H1 (cell line): ENCODE measurements at regions of chr13 and their contacts with region 1.

Region 1: GRCh38 chr13:110683203-110683883 is 22.6 kb downstream of the CARS2 start:
- DNase-seq: no peak
- H3K4me3 ChIP-seq: no peak overlapping the region
- H3K27ac ChIP-seq: no peak overlapping the region
- H3K4me1 ChIP-seq: no peaks in the 10 kb centered on the region
- H3K27me3 ChIP-seq: no peaks in the 10 kb centered on the region
- CTCF ChIP-seq: peak; percentile 39 to 53 (median 45); a peak in 3 of 4 replicates
- EP300 ChIP-seq: no peak
- POLR2A ChIP-seq: no peak
- RAD21 ChIP-seq: peak; percentile 62

Region 2: DNA sequence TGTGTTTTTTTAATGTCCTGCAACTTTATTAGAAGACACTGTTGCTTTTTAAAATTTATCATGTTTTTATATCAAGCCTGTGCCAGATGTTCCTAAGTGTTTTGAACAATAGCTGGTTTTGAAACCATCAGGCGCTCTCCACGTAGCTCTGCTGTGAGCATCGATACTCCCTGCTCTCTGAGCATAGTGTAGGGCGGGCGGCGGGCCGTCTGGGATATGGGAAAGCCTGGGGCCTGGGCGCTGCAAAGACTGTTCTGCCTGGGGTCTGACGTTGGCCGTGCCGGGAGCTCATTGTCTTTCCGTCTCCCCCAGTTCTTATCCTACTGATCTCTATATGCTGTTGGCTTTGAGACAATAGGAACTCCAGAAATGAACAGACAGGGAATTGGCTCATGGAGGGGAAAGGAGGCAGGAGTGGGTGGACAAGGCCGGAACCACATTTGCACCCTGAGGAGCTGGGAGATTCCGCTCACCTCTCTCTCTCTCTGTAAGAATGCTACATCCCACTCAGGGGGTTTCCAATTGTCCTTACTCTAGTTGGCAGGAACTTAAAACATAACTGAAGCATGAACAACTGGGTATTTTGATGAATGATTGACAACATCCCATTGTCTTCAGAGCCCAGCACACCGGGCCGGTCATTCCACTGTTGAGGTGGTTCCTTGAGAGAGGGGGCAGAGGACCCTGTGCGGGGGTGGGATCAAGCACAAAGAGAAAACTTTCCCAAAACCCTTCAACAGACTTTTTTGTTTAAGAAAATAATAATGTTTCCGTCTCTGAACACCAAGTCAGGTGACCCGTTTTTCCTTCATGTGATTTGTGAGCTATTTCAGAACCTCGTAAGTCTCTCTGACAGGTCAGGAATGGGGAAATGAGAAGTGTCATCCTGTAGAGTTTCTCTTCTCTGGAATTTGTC is 311.5 kb before region 1 on chr13:
- CTCF ChIA-PET with region 1: no interaction called
- POLR2A ChIA-PET with region 1: no interaction called
- DNase-seq: no peak
- H3K4me3 ChIP-seq: no peak overlapping the region
- H3K27ac ChIP-seq: no peak overlapping the region
- H3K4me1 ChIP-seq: no peaks in the 10 kb centered on the region
- H3K27me3 ChIP-seq: no peaks in the 10 kb centered on the region
- CTCF ChIP-seq: no peak
- EP300 ChIP-seq: no peak
- POLR2A ChIP-seq: no peak
- RAD21 ChIP-seq: no peak

Region 3: GRCh38 chr13:110644892-110645521 is 38.3 kb before region 1 on chr13:
- CTCF ChIA-PET with region 1: interaction called, 12 read pairs
- POLR2A ChIA-PET with region 1: interaction called, 3 read pairs
- DNase-seq: peak; percentile 82 to 87
- H3K4me3 ChIP-seq: no peak overlapping the region
- H3K27ac ChIP-seq: no peak overlapping the region
- H3K4me1 ChIP-seq: peaks cover 0 to 11% (median 7%) of the 10 kb centered on the region in 4 experiments; a peak in 5 of 7 replicates
- H3K27me3 ChIP-seq: no peaks in the 10 kb centered on the region
- CTCF ChIP-seq: peak in 2 of 3 experiments; percentile 83 to 85; a peak in 3 of 4 replicates
- EP300 ChIP-seq: no peak
- POLR2A ChIP-seq: no peak
- RAD21 ChIP-seq: peak; percentile 93

Region 4: DNA sequence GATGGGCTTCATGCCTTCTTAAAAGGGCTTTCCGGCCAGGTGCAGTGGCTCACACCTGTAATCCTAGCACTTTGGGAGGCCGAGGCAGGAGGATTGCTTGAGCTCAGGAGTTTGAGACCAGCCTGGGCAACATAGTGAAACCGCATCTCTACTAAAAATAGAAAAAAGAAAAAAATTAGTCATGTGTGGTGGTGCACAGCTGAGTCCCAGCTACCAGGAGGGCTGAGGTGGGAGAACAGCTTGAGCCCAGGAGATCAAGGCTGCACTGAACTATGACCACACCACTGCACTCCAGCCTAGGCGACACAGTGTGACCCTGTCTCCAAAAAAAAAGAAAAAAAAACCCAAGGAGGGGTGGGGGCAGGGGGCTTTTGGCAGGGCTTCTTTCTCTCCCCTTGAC is 15.3 kb after region 1 on chr13:
- CTCF ChIA-PET with region 1: interaction called, 13 read pairs
- POLR2A ChIA-PET with region 1: interaction called, 43 read pairs
- DNase-seq: no peak
- H3K4me3 ChIP-seq: no peak overlapping the region
- H3K27ac ChIP-seq: no peak overlapping the region
- H3K4me1 ChIP-seq: peaks cover 0 to 3% (median under 1%) of the 10 kb centered on the region in 4 experiments; a peak in 1 of 7 replicates
- H3K27me3 ChIP-seq: no peaks in the 10 kb centered on the region
- CTCF ChIP-seq: no peak
- EP300 ChIP-seq: no peak
- POLR2A ChIP-seq: no peak
- RAD21 ChIP-seq: no peak

Region 5: GRCh38 chr13:110705826-110706569 is 22.7 kb after region 1 on chr13 and contains the start of gene CARS2:
- CTCF ChIA-PET with region 1: interaction called, 13 read pairs
- POLR2A ChIA-PET with region 1: interaction called, 43 read pairs
- DNase-seq: peak; percentile 87 to 91
- H3K4me3 ChIP-seq: peak within 1 kb of the TSS; percentile 66 to 96 (median 80)
- H3K27ac ChIP-seq: peak within 1 kb of the TSS; percentile 71
- H3K4me1 ChIP-seq: peaks cover 0 to 14% (median 6%) of the 10 kb centered on the region in 4 experiments; a peak in 4 of 7 replicates
- H3K27me3 ChIP-seq: no peaks in the 10 kb centered on the region
- CTCF ChIP-seq: peak in 1 of 3 experiments; percentile 6; a peak in 1 of 4 replicates
- EP300 ChIP-seq: no peak
- POLR2A ChIP-seq: peak in 1 of 2 experiments; percentile 35; a peak in 2 of 3 replicates
- RAD21 ChIP-seq: no peak
- total RNA-seq, gene CARS2: 44.5 and 55.9 TPM in 2 replicates

Region 6: GRCh38 chr13:110715395-110716235 is 32.3 kb after region 1 on chr13:
- CTCF ChIA-PET with region 1: interaction called, 7 read pairs
- POLR2A ChIA-PET with region 1: interaction called, 10 read pairs
- DNase-seq: peak; percentile 93 to 97
- H3K4me3 ChIP-seq: peak overlapping the region; percentile 77 to 98 (median 90)
- H3K27ac ChIP-seq: peak overlapping the region; percentile 24
- H3K4me1 ChIP-seq: peaks cover 0 to 2% (median 1%) of the 10 kb centered on the region in 4 experiments; a peak in 2 of 7 replicates
- H3K27me3 ChIP-seq: no peaks in the 10 kb centered on the region
- CTCF ChIP-seq: no peak
- EP300 ChIP-seq: no peak
- POLR2A ChIP-seq: peak in 1 of 2 experiments; percentile 63; a peak in 1 of 3 replicates
- RAD21 ChIP-seq: no peak

Region 7: DNA sequence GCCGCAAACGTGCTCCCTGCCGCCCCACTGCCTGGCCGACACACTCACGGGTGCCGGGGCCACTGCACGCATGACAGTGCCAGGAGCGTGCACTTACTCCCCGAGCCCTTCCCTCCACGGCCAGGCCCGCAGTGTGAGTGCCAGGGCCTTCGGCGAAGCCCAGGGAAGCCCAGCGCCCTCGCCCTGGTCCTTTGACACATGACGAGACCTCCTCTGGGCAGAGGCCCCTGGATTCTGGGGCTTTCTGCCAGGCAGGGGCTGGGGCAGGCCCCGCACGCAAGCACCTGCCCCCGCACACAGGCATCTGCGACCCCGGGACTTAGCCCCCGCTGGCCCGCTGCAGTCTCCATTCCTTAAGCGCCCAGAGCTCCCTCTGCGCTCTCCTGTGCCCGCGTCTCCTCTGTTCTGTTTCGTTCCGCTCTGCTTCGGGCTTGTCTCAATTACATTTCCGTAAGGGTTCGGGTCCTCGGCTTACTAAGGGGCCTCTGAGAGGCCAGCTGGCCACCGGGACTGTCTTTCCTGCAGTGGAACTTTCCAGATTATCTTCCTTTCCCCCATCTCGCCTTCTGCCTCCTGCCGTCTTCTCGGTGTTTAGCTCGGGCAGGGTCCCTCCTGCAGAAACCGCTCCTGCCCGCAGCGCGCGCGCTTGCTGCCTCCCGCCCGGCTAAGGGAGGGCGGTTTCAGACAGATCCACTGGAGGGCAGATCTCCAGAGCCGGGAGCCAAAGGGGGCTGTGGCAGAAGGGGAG is 129.0 kb after region 1 on chr13:
- CTCF ChIA-PET with region 1: interaction called, 27 read pairs
- POLR2A ChIA-PET with region 1: no interaction called
- DNase-seq: peak in 1 of 2 experiments; percentile 68
- H3K4me3 ChIP-seq: peak overlapping the region; percentile 13 to 32 (median 30); a peak in 4 of 8 replicates
- H3K27ac ChIP-seq: no peak overlapping the region
- H3K4me1 ChIP-seq: peaks cover 5 to 23% (median 13%) of the 10 kb centered on the region in 4 experiments
- H3K27me3 ChIP-seq: peaks cover 0 to 19% (median 14%) of the 10 kb centered on the region in 4 experiments; a peak in 6 of 7 replicates
- CTCF ChIP-seq: peak; percentile 9 to 34 (median 28)
- EP300 ChIP-seq: no peak
- POLR2A ChIP-seq: no peak
- RAD21 ChIP-seq: peak in 1 of 2 experiments; percentile 7; a peak in 2 of 4 replicates

Region 8: DNA sequence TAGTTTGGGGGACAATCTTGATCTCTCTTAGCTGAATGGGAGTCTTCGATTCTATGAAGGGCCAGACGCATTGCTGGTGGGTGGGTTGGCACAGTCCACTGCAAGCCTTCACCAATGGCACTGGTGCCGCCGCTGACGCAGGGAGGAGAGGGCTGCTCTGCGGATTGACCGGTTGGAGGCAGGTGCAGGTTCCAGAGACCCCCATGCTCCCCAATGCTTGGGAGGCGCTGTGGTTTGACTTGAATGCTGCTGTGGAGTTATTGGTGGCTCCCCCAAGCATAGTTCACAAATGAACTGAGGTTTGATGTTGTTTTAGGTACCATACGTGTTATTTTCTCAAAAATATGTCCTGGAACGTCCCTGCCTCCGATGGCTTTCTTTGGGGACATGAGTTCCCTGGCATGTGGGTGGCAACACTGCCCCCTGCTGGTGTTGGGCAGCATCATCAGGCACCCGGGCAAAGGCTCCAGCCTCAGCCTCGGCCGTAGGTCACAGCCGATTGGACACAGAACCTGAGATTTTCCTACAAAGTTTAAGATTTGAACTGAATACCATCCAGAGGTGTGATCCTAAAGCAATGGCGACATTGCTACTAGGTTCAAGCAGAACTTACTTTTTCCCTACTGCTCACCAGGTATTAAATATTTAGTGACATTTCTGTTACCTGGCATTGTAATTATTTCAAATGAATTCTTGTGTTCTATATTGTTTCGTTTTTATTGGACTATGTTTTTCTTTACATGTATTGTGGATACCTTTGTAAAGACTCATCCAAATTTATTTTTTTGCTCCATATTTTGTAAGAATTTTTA is 136.1 kb after region 1 on chr13:
- CTCF ChIA-PET with region 1: interaction called, 27 read pairs
- POLR2A ChIA-PET with region 1: no interaction called
- DNase-seq: peak; percentile 43 to 93
- H3K4me3 ChIP-seq: no peak overlapping the region; a peak in 1 of 8 replicates
- H3K27ac ChIP-seq: no peak overlapping the region
- H3K4me1 ChIP-seq: 0 out of 7 replicates have a peak, but pooled peaks cover 0 to 2% (median 0%) of the 10 kb centered on the region in 4 experiments
- H3K27me3 ChIP-seq: no peaks in the 10 kb centered on the region
- CTCF ChIP-seq: peak; percentile 88 to 98 (median 88)
- EP300 ChIP-seq: no peak
- POLR2A ChIP-seq: no peak
- RAD21 ChIP-seq: peak; percentile 90